Dorsolateral prefrontal cortex (tissue), 120 donors: ENCODE measurements at regions of chr15 and their contacts with region 1.

Region 1: GRCh38 chr15:101251830-101252820 is at the start of gene CHSY1:
- DNase-seq: peak; percentile 82 to 93 (median 88)
- H3K4me3 ChIP-seq: peak within 1 kb of the TSS; percentile 62 to 92 (median 82)
- H3K27ac ChIP-seq: peak within 1 kb of the TSS in 58 of 59 donors; percentile 2 to 96 (median 86)
- H3K27me3 ChIP-seq: no peaks in the 10 kb centered on the region
- CTCF ChIP-seq: peak in 41 of 56 donors; percentile 7 to 70 (median 35)
- total RNA-seq, gene CHSY1: 16.3 to 47.8 (median 26.7) TPM

Region 2: DNA sequence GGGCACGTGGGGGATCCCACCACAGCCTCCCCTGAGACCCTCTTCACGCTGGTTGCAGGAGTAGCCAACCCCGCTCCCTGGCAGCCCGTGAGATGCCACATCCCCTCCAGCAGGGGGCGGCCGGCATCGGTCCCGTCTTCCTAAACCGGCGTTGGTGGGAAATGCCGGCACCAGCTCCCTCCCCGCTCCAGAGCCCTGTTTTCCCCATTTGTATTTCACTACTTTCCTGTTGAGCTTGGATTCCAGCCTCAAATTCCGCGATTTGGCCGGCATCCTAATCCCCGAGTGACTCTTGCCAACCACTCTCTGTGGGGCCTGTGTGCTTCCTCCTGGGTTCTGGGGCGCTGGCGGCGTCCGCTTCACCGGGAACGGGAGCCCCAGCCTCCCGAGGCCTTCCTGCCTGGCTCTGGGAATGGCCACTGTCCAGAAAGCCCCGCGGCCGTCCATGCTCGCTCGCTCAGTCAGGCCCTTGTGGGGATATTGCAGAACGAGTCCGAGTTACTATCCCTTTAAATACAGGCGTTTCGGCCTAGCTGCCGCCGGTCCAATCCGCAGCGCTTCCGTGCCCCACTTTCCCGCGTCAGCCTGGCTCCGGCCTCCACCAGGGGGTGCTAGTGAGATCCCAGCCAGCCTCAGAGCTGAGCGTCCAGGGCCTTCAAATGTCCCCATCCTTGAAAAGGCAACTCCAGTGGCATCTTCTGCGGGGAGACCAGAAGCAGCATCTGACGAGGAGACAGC is 902.3 kb before region 1 on chr15:
- intact Hi-C with region 1: loop called in 1 of 2 experiments (anchors 10 kb)
- DNase-seq: peak; percentile 87 to 95 (median 92)
- H3K4me3 ChIP-seq: peak overlapping the region; percentile 53 to 94 (median 79)
- H3K27ac ChIP-seq: peak overlapping the region; percentile 37 to 96 (median 91)
- H3K27me3 ChIP-seq: peaks cover 0 to 12% (median 0%) of the 10 kb centered on the region in 45 donors
- CTCF ChIP-seq: peak; percentile 51 to 93 (median 78)

Region 3: GRCh38 chr15:100873029-100873677 is 379.0 kb before region 1 on chr15:
- intact Hi-C with region 1: loop called (anchors 10 kb)
- DNase-seq: peak in 6 of 10 donors; percentile 50 to 84 (median 56)
- H3K4me3 ChIP-seq: no peak overlapping the region
- H3K27ac ChIP-seq: no peak overlapping the region
- H3K27me3 ChIP-seq: peaks cover 0 to 12% (median 2%) of the 10 kb centered on the region in 45 donors
- CTCF ChIP-seq: peak; percentile 84 to 98 (median 93)

Region 4: DNA sequence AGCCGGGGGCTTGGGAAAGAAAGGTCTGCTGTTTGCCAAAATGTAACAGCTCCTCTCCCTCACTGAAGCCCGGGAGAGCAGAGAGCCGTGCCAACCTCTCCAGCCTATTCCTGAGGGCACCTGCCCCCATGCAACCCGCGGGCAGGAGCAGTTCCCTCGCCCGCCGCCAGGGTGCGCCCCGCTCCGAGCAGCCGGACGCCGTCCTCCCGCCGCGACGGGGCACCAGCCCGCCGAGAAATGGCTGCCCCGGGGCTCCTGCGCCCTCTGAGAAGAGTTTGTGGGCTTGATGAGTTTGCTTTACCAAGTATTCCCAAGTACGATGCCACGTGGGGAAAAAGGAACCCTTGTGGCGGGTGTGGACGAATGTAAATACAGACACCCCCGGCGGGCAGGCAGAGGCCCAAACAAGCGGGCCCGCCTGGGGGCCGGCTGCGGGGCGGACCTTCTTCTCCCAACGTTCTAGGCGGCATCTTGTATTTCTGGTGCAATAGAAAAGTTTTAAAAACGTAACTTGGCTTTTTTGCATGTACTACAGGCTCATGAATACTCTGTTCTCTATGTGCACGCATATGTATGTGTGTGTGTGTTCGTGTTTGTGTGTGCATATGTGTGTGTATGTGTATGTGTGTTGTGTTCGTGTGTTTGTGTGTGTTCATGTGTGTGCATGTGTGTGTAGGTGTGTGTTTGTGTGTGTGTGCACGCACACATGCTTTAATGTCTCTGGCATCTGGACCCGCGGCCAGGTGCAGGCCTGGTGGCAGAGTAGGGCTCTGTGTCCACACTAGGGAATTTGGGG is 163.1 kb before region 1 on chr15:
- intact Hi-C with region 1: loop called (anchors 2 to 5 kb)
- DNase-seq: peak in 8 of 10 donors; percentile 33 to 78 (median 62)
- H3K4me3 ChIP-seq: peak overlapping the region in 25 of 59 donors; percentile 9 to 53 (median 30)
- H3K27ac ChIP-seq: peak overlapping the region in 10 of 59 donors; percentile 1 to 83 (median 38)
- H3K27me3 ChIP-seq: no peaks in the 10 kb centered on the region
- CTCF ChIP-seq: peak; percentile 74 to 100 (median 97)

Region 5: DNA sequence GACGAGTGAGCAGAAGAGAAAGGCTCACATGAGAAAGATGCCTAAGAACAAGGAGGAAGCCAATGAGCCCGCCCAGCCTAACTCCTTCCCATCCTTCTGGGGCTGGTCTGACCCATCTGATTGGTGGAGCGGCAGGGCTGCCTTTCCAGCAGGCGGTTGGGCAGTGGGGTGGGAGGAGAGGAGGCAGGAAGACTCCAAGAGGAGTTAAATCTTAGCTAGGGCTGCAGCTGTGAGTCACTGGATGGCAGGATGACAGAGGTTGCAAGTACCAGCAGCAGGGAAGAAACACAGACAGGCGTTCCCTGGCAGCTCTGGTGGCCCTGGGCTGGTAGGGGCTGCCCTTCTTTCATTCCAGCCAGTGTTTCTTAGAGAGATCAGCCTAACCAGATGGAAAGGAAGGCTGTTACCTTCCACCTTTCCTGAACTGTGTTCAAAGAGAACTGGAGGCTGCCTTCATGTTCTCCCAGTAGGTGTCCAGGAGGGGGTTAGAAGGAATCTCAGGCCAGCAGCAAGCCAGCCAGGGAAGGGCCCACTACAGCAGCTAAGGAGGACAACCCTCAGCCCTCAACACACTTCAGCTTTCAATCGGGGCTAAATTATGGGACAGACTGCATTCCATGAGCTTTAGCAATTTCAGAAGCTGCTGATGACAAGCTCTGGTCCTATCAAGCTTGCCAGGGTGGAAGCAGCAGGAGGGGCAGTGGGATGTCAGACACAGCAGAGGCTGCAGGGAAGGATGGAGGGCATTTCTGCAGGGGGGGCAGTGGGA is 50.5 kb before region 1 on chr15:
- intact Hi-C with region 1: loop called (anchors 5 to 10 kb)
- DNase-seq: peak; percentile 36 to 95 (median 84)
- H3K4me3 ChIP-seq: peak overlapping the region in 11 of 59 donors; percentile 5 to 35 (median 20)
- H3K27ac ChIP-seq: peak overlapping the region in 52 of 59 donors; percentile 7 to 90 (median 66)
- H3K27me3 ChIP-seq: no peaks in the 10 kb centered on the region
- CTCF ChIP-seq: no peak

Region 6: GRCh38 chr15:101320501-101321052 is 68.5 kb after region 1 on chr15:
- intact Hi-C with region 1: no loop called
- DNase-seq: peak in 3 of 10 donors; percentile 21 to 39 (median 34)
- H3K4me3 ChIP-seq: peak overlapping the region in 2 of 59 donors; percentile 8 to 10
- H3K27ac ChIP-seq: no peak overlapping the region
- H3K27me3 ChIP-seq: no peaks in the 10 kb centered on the region
- CTCF ChIP-seq: peak in 5 of 56 donors; percentile 6 to 18 (median 13)

Region 7: DNA sequence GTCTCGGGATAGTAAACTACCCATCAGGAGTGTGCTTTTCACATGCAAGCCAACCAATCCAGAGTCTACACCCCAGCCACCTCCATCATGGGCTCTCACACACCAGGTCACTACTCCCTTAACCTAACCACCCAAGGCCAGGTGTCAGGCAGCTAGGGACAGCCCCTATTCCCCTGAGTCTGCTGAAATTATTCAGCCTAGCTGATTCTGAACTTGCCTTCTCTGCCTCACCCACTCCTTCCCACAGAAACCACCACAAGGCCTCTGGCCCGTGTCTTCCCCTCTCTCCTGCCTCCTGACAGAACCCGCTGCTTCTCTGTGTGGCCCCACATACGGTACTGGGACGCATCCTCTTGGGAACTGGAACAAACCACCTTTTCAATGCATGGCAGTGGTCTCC is 155.3 kb after region 1 on chr15:
- intact Hi-C with region 1: no loop called
- DNase-seq: no peak
- H3K4me3 ChIP-seq: no peak overlapping the region
- H3K27ac ChIP-seq: no peak overlapping the region
- H3K27me3 ChIP-seq: no peaks in the 10 kb centered on the region
- CTCF ChIP-seq: no peak